Activated CD4-positive, alpha-beta T cell treated with anti-CD3 and anti-CD28 coated beads for 36 hours (primary cell): ENCODE measurements at regions of chr9 and their contacts with region 1.

Region 1: DNA sequence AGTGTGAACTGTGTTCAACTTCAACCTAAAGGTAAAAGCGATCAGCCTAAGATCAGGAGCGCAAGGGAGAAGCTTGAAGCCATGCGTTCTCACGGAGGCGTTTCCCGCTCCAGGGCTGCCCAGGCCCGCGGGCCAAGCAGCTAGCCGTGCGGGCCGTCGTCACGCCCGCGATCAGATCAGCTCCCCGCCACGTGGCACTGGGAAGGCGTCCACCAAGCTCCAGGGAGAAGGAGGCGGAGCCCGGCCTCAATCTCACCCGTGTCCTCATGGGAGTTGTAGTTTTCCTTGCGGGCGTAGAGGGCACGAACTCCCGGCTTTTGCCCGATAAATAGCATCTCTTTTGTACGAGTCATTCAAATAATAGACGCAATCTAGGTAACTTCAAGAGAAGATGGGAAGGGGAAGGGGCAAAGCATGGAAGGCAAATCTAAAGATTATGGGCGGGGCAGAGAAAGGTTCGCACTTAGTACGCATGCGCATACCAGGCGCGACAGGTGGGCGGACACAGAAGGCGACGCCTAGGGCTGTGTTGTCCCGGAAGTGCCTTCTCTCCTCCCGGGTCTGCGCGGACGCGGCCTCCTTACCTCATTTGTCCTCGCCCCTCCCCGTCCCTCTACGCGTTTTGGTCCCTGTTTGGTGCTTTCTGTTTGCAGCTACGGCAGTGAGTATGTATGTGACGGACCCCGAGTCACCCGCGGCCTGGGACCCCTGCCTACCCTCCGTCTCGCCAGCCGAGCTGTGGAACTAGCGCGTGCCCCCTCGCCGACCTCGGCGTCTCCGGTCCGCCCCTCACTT is 40.8 kb upstream of the ZCCHC7 start:
- DNase-seq: peak; percentile 97
- ATAC-seq: peak; percentile 98
- H3K4me3 Mint-ChIP-seq: peak overlapping the region; percentile 94
- H3K27ac Mint-ChIP-seq: peak overlapping the region; percentile 96
- H3K4me1 Mint-ChIP-seq: peaks cover 42% of the 10 kb centered on the region
- H3K27me3 Mint-ChIP-seq: peaks cover 3% of the 10 kb centered on the region

Region 2: GRCh38 chr9:36765468-36766341 is 313.9 kb before region 1 on chr9:
- CTCF ChIA-PET with region 1: no interaction called
- POLR2A ChIA-PET with region 1: no interaction called
- intact Hi-C with region 1: loop called in 1 of 2 experiments (anchors 1 kb)
- DNase-seq: peak; percentile 95
- ATAC-seq: peak; percentile 99
- H3K4me3 Mint-ChIP-seq: no peak overlapping the region
- H3K27ac Mint-ChIP-seq: peak overlapping the region; percentile 16
- H3K4me1 Mint-ChIP-seq: peaks cover 2% of the 10 kb centered on the region
- H3K27me3 Mint-ChIP-seq: peaks cover 6% of the 10 kb centered on the region

Region 3: GRCh38 chr9:37036776-37037502 is 42.6 kb before region 1 on chr9:
- CTCF ChIA-PET with region 1: interaction called, 4 read pairs
- POLR2A ChIA-PET with region 1: no interaction called
- intact Hi-C with region 1: loop called (anchors 1 to 2 kb)
- DNase-seq: peak; percentile 67
- ATAC-seq: peak; percentile 62
- H3K4me3 Mint-ChIP-seq: peak overlapping the region; percentile 74
- H3K27ac Mint-ChIP-seq: peak overlapping the region; percentile 14
- H3K4me1 Mint-ChIP-seq: peaks cover 35% of the 10 kb centered on the region
- H3K27me3 Mint-ChIP-seq: peaks cover 66% of the 10 kb centered on the region

Region 4: GRCh38 chr9:37187713-37188439 is 108.3 kb after region 1 on chr9:
- CTCF ChIA-PET with region 1: no interaction called
- POLR2A ChIA-PET with region 1: no interaction called
- intact Hi-C with region 1: loop called in 1 of 2 experiments (anchors 5 kb)
- DNase-seq: peak; percentile 30
- ATAC-seq: peak; percentile 87
- H3K4me3 Mint-ChIP-seq: peak overlapping the region; percentile 36
- H3K27ac Mint-ChIP-seq: peak overlapping the region; percentile 90
- H3K4me1 Mint-ChIP-seq: peaks cover 44% of the 10 kb centered on the region
- H3K27me3 Mint-ChIP-seq: no peaks in the 10 kb centered on the region

Region 5: DNA sequence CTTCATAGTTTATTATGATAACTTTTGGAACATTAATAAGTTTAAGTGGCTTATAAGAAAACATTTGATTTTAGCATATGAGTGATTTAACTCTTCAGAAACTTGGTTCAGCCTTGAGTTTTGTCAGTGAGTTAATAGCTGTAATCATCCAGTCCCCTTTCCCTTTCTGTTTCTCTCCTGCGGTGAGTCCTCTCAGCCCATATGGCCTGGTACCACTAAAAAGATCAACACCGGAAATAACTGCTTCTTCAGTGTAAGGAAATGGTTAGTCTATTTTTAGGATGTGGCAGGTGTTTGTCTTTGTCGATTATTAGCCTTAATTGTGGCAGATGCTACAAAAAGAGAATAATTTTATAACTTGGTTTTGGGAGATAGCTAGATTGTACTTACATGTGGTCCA is 222.7 kb after region 1 on chr9:
- CTCF ChIA-PET with region 1: interaction called, 4 read pairs
- POLR2A ChIA-PET with region 1: no interaction called
- intact Hi-C with region 1: loop called (anchors 2 to 5 kb)
- DNase-seq: peak; percentile 61
- ATAC-seq: peak; percentile 90
- H3K4me3 Mint-ChIP-seq: peak overlapping the region; percentile 51
- H3K27ac Mint-ChIP-seq: peak overlapping the region; percentile 87
- H3K4me1 Mint-ChIP-seq: peaks cover 51% of the 10 kb centered on the region
- H3K27me3 Mint-ChIP-seq: no peaks in the 10 kb centered on the region

Region 6: DNA sequence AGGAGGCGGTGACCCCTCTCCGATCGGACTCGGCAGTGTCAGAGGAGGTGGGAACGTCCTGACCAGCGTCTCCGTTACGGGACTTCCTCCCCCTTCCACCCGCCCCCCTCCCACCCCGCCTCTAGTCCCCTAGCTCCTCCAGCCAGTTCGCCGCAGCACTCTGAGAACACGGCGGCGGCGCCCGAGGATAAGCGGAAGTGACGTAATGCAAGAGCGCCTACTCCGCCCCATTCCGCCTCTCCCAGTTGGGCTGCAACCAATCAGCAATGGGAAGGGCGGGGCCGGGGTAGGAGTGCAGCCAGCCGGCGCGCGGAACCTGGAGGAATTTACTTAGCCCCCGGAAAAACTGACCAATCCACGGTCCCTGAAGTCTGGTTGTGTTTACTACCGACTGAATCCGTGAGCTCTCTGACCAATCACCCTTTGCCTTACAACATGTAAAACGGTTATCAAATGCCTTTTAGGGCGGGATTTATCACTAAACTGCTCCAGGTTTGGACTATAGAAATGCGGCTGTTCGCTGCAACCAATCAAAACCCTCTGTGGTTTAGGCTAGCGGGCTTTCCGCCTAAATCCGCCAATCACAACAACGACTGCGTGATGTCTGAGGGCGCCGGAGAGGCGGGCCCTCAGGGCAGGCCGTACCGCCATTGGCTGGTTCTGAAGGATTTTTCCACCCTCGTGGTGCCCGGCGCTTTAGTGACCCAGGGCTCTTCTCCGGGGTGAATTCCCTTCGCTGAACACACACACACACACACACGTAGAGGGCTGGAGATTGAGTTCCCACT is 385.9 kb after region 1 on chr9 and contains the start of gene ZBTB5:
- CTCF ChIA-PET with region 1: no interaction called
- POLR2A ChIA-PET with region 1: no interaction called
- intact Hi-C with region 1: loop called in 1 of 2 experiments (anchors 1 kb)
- DNase-seq: peak; percentile 99
- ATAC-seq: peak; percentile 85
- H3K4me3 Mint-ChIP-seq: peak within 1 kb of the TSS; percentile 97
- H3K27ac Mint-ChIP-seq: peak within 1 kb of the TSS; percentile 96
- H3K4me1 Mint-ChIP-seq: peaks cover 30% of the 10 kb centered on the region
- H3K27me3 Mint-ChIP-seq: no peaks in the 10 kb centered on the region
- total RNA-seq, gene ZBTB5: 8.0 to 9.1 TPM